ENCODE measurements at regions of chr4 and their contacts with region 1.

Region 1: GRCh38 chr4:48127682-48128394 is 6.2 kb downstream of the TXK start:
- DNase-seq: peak; percentile 93
- H3K4me3 ChIP-seq: peak overlapping the region in 1 of 3 experiments; percentile 2
- H3K27ac ChIP-seq: peak overlapping the region; percentile 37
- H3K4me1 ChIP-seq: peaks cover 17% of the 10 kb centered on the region
- H3K27me3 ChIP-seq: no peaks in the 10 kb centered on the region
- CTCF ChIP-seq: peak; percentile 44 to 63

Region 2: GRCh38 chr4:48033825-48034413 is 93.9 kb before region 1 on chr4:
- CTCF ChIA-PET with region 1: no interaction called
- dilution Hi-C with region 1: no loop called
- in situ Hi-C with region 1: loop called in 1 of 2 experiments (anchors 25 kb)
- intact Hi-C with region 1: no loop called
- DNase-seq: peak; percentile 34
- H3K4me3 ChIP-seq: no peak overlapping the region
- H3K27ac ChIP-seq: no peak overlapping the region
- H3K4me1 ChIP-seq: no peaks in the 10 kb centered on the region
- H3K27me3 ChIP-seq: no peaks in the 10 kb centered on the region
- CTCF ChIP-seq: peak; percentile 73 to 76